ENCODE measurements at regions of chr4 and their contacts with region 1.

Region 1: DNA sequence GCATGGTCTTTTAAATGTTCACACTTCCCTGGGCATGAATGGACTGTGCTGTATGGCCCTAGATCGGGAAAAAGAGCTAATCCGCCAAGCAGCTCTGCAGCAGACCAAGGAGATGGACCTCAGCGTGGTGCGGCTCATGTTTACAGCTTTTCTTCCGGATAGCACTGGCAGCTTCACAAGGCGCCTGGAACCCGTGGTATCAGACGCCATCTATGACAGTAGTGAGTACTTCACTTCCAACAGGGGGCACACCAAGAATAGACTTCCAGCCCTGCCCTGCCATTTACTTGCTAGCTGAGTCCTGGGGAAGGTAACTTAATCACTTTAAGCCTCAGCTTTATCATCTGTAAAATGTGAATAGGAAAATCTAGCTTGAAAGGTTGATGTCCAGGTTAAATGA is 77.7 kb downstream of the NFKB1 start:
- DNase-seq: peak; percentile 44 to 50
- H3K4me3 ChIP-seq: no peak overlapping the region
- H3K27ac ChIP-seq: no peak overlapping the region
- H3K4me1 ChIP-seq: no peaks in the 10 kb centered on the region; a peak in 1 of 7 replicates
- H3K27me3 ChIP-seq: no peaks in the 10 kb centered on the region; a peak in 1 of 7 replicates
- CTCF ChIP-seq: peak; percentile 52 to 83 (median 76)
- EP300 ChIP-seq: no peak
- POLR2A ChIP-seq: no peak
- RAD21 ChIP-seq: peak; percentile 78 to 82

Region 2: DNA sequence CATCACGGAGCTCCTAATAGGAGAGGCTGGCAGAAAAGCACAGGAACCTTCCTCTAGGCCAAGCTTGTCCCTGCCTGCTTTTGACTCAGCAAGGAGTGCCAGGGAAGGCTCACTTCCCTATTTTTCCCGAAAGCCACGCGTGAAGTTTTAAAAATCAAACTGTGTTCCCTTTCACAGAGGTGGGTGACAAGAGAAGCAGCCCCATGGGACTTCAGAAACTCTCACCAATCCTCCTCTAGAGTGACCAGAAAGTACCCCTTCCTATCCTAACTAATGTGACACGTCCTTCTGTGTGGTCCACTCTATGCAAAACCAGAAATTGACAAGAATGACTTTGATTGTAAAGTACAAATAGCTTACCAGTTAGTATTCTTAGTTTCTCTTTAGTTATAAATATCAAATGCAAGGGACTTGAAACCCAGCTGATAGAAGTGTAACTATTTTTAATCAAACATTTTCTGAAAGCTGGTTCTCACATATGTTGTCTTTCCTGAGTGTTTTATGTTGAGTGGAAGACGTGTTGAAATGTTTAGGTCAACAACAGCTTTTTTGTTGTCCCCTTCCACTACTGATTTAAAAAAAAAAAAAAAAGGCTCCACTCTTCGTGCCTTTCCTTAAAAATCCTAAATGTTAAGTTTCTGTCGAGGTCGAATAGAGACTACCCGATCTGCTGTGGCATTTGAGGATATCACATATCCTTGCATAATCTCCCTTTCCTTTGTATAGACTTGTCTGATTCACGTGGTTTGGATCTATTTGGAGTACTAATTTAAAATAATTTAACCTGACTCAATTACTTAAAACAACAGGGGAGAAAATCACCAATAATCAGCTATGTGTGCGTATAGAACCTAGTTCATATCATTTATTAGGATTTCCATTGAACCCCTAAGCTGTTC is 35.5 kb before region 1 on chr4:
- CTCF ChIA-PET with region 1: interaction called, 16 read pairs
- POLR2A ChIA-PET with region 1: no interaction called
- DNase-seq: no peak
- H3K4me3 ChIP-seq: no peak overlapping the region
- H3K27ac ChIP-seq: no peak overlapping the region
- H3K4me1 ChIP-seq: no peaks in the 10 kb centered on the region
- H3K27me3 ChIP-seq: no peaks in the 10 kb centered on the region
- CTCF ChIP-seq: no peak
- EP300 ChIP-seq: no peak
- POLR2A ChIP-seq: no peak
- RAD21 ChIP-seq: no peak

Region 3: GRCh38 chr4:102598762-102599374 is 20.0 kb after region 1 on chr4:
- CTCF ChIA-PET with region 1: interaction called, 12 read pairs
- POLR2A ChIA-PET with region 1: no interaction called
- DNase-seq: no peak
- H3K4me3 ChIP-seq: no peak overlapping the region
- H3K27ac ChIP-seq: no peak overlapping the region
- H3K4me1 ChIP-seq: no peaks in the 10 kb centered on the region
- H3K27me3 ChIP-seq: no peaks in the 10 kb centered on the region
- CTCF ChIP-seq: no peak
- EP300 ChIP-seq: no peak
- POLR2A ChIP-seq: no peak
- RAD21 ChIP-seq: no peak

Region 4: GRCh38 chr4:102620697-102621497 is 42.1 kb after region 1 on chr4:
- CTCF ChIA-PET with region 1: interaction called, 15 read pairs
- POLR2A ChIA-PET with region 1: no interaction called
- DNase-seq: no peak
- H3K4me3 ChIP-seq: no peak overlapping the region
- H3K27ac ChIP-seq: no peak overlapping the region
- H3K4me1 ChIP-seq: peaks cover 5 to 10% (median 6%) of the 10 kb centered on the region in 4 experiments; a peak in 6 of 7 replicates
- H3K27me3 ChIP-seq: no peaks in the 10 kb centered on the region
- CTCF ChIP-seq: peak in 2 of 3 experiments; percentile 33 to 34; a peak in 2 of 4 replicates
- EP300 ChIP-seq: no peak
- POLR2A ChIP-seq: no peak
- RAD21 ChIP-seq: peak; percentile 62 to 65

Region 5: DNA sequence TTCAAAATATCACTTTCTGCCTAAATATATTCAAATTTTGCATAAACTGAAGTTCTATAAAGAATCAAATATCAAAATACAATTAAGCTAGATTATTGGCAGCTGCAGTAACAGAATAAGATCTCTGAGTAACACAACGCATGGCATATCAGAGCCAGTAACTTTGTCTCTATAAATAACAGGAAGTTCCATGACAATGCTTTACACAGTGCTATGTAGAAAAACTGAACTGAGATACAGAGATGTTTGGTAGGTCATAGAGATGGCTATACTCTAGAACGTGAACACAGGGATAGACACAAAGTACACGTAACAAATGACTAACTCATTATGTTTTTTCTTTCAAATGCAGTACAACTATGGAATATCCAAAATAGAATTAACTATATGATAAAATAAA is 230.4 kb after region 1 on chr4:
- CTCF ChIA-PET with region 1: no interaction called
- POLR2A ChIA-PET with region 1: no interaction called
- DNase-seq: no peak
- H3K4me3 ChIP-seq: no peak overlapping the region
- H3K27ac ChIP-seq: no peak overlapping the region
- H3K4me1 ChIP-seq: peaks cover 0 to 3% (median 0%) of the 10 kb centered on the region in 4 experiments; a peak in 1 of 7 replicates
- H3K27me3 ChIP-seq: no peaks in the 10 kb centered on the region
- CTCF ChIP-seq: no peak
- EP300 ChIP-seq: no peak
- POLR2A ChIP-seq: no peak
- RAD21 ChIP-seq: no peak

Measured in H1 (cell line).